ENCODE measurements at regions of chr16 and their contacts with region 1.

Region 1: GRCh38 chr16:4944333-4945281 is 7.7 kb upstream of the PPL start:
- DNase-seq: peak; percentile 84
- ATAC-seq: peak; percentile 65
- H3K4me3 ChIP-seq: peak overlapping the region; percentile 35 to 41
- H3K27ac ChIP-seq: peak overlapping the region; percentile 100
- H3K4me1 ChIP-seq: peaks cover 63 to 82% of the 10 kb centered on the region in 2 experiments
- H3K27me3 ChIP-seq: no peaks in the 10 kb centered on the region
- CTCF ChIP-seq: no peak
- POLR2A ChIP-seq: no peak
- RAD21 ChIP-seq: no peak

Region 2: GRCh38 chr16:4529085-4530060 is 415.2 kb before region 1 on chr16:
- CTCF ChIA-PET with region 1: no interaction called
- POLR2A ChIA-PET with region 1: no interaction called
- RAD21 ChIA-PET with region 1: no interaction called
- intact Hi-C with region 1: no loop called
- DNase-seq: no peak
- ATAC-seq: no peak; the same call in 1 of the 2 replicates
- H3K4me3 ChIP-seq: no peak overlapping the region
- H3K27ac ChIP-seq: no peak overlapping the region
- H3K4me1 ChIP-seq: no peaks in the 10 kb centered on the region
- H3K27me3 ChIP-seq: no peaks in the 10 kb centered on the region
- CTCF ChIP-seq: no peak
- POLR2A ChIP-seq: no peak
- RAD21 ChIP-seq: no peak

Region 3: GRCh38 chr16:4624015-4624826 is 320.4 kb before region 1 on chr16 and contains the start of gene MGRN1:
- CTCF ChIA-PET with region 1: no interaction called
- POLR2A ChIA-PET with region 1: no interaction called
- RAD21 ChIA-PET with region 1: no interaction called
- intact Hi-C with region 1: loop called (anchors 5 kb)
- DNase-seq: peak; percentile 96
- ATAC-seq: peak; percentile 96
- H3K4me3 ChIP-seq: peak within 1 kb of the TSS; percentile 86 to 87
- H3K27ac ChIP-seq: peak within 1 kb of the TSS; percentile 95
- H3K4me1 ChIP-seq: peaks cover 15 to 21% of the 10 kb centered on the region in 2 experiments
- H3K27me3 ChIP-seq: no peaks in the 10 kb centered on the region
- CTCF ChIP-seq: peak; percentile 85 to 98 (median 97); a peak in 5 of 6 replicates
- POLR2A ChIP-seq: no peak
- RAD21 ChIP-seq: peak; percentile 72; the same call in 1 of the 2 replicates
- total RNA-seq, gene MGRN1: 50.6 TPM

Region 4: DNA sequence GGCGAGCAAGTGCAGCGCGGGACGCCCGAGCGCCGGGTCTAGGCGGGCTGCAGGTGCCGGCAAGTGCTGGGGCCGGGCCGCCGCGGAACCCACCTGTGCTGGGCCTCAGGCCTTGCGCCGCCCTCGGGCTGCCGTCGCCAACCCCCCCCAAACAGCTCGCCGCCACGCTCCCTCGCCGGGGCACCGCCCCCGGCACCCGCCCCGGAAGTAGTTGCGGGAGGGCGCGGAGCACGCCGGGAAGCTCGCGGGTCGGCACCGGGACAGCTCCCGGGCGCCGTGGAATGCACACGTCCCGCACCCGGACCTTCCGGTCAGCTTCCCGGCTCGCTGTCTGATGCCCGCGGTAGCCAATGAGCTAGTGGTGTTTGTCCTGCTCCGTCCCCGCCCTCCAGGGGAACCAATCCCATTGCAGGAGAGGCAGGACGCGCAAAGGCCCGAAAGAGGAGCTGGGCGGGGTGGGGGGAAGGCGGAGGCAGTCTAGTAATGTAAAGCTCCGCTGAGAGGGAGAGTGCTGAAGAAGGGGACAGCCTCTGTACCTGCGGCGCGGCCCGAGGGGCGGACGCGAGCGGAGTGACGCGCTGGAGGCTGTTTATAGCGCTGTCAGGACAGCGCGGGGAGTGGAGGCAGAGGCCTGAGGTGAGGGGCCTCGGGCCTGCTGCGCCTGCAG is 210.4 kb before region 1 on chr16 and contains the starts of genes ANKS3 and DNAAF8:
- CTCF ChIA-PET with region 1: no interaction called
- POLR2A ChIA-PET with region 1: interaction called, 6 read pairs
- RAD21 ChIA-PET with region 1: no interaction called
- intact Hi-C with region 1: loop called (anchors 5 kb)
- DNase-seq: peak; percentile 92
- ATAC-seq: peak; percentile 94
- H3K4me3 ChIP-seq: peak within 1 kb of the TSS; percentile 97
- H3K27ac ChIP-seq: peak within 1 kb of the TSS; percentile 83
- H3K4me1 ChIP-seq: peaks cover 8 to 19% of the 10 kb centered on the region in 2 experiments
- H3K27me3 ChIP-seq: no peaks in the 10 kb centered on the region
- CTCF ChIP-seq: no peak
- POLR2A ChIP-seq: peak; percentile 57
- RAD21 ChIP-seq: no peak
- total RNA-seq, gene ANKS3: 25.5 TPM
- total RNA-seq, gene DNAAF8: 1.0 TPM

Region 5: DNA sequence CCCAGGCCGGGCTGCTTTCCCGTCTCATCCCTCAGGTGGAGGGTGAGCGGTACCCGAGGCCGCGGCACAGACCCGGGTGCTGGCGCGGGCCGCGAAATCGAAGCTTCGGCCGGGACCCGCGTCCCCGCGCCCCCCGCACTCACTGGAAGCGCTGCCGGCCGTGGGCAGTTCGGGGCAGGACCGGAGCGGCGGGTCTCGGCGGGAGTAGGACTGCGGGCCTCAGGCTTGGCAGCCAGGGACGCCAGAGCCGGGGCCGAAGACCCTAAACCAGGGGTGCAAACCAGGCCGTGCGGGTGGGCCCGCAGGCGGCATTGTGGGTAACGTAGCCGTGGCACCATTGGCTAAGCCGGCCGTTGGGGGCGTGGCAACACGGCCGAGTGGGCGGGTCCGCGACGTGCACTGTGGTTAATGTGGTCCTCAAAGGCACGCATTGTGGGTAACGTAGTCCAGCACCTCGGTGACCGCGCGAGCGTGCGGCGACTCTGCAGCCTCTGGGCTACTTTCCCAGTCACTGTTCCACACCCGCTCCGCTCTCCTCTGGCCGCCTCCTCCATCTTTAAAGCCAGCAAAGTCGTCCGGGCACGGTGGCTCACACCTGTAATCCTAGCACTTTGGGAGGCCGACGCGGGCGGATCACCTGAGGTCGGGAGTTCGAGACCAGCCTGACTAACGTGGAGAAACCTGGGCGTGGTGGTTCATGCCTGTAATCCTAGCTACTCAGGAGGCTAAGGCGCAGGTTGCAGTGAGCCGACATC is 177.6 kb before region 1 on chr16 and contains the start of gene ZNF500:
- CTCF ChIA-PET with region 1: no interaction called
- POLR2A ChIA-PET with region 1: no interaction called
- RAD21 ChIA-PET with region 1: no interaction called
- intact Hi-C with region 1: loop called (anchors 5 kb)
- DNase-seq: peak; percentile 90
- ATAC-seq: peak; percentile 87
- H3K4me3 ChIP-seq: peak within 1 kb of the TSS; percentile 92 to 93
- H3K27ac ChIP-seq: peak within 1 kb of the TSS; percentile 56
- H3K4me1 ChIP-seq: peaks cover 12 to 23% of the 10 kb centered on the region in 2 experiments
- H3K27me3 ChIP-seq: no peaks in the 10 kb centered on the region
- CTCF ChIP-seq: no peak
- POLR2A ChIP-seq: peak; percentile 81
- RAD21 ChIP-seq: no peak
- total RNA-seq, gene ZNF500: 20.1 TPM

Region 6: DNA sequence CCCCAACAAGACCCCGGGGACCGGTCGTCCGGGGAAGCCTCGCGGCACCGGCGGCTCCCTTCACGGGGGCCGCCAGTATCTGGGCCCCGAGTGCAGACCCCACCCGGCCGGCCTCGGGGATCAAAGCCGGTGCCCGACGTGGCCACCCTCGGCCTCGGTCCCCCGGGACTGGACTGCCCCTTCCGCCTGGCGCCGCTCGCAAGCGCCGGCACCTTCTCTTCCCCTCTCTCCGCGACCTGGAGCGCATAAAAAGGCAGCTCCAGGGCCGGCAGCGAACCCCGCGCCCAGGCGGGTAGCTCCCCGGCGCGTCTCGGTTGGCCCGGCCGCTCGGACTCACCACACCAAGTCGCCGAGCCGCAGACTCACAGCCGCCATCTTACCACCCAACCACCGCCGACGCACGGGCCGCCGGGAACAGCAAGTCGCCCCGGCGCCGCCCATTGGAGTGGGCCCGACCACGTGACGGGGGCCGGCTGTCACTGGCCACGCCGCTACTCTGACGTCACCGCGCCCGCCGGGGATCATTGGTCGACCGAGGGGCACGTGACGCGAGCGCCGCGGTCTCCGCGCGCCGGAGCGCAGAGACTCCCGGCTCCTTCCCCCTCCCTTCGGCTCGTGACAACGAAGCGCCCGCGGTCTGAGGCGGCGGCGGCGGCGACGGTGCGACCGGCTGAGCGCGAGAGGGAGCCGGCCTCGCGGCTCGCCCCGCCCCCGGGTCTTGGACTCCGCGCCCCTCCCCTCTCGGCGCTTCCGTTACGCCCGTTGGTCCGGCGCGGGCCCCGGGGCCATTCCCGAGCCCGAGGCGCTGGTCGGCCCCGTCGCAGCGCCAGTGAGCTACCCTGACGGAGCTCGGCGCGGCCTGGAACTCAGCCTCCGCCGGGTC is 97.5 kb before region 1 on chr16 and contains the starts of genes GLYR1 and UBN1:
- CTCF ChIA-PET with region 1: no interaction called
- POLR2A ChIA-PET with region 1: no interaction called
- RAD21 ChIA-PET with region 1: no interaction called
- intact Hi-C with region 1: loop called (anchors 2 kb)
- DNase-seq: peak; percentile 86
- ATAC-seq: peak; percentile 89
- H3K4me3 ChIP-seq: peak within 1 kb of the TSS; percentile 90 to 92
- H3K27ac ChIP-seq: peak within 1 kb of the TSS; percentile 91
- H3K4me1 ChIP-seq: peaks cover 13 to 35% of the 10 kb centered on the region in 2 experiments
- H3K27me3 ChIP-seq: no peaks in the 10 kb centered on the region
- CTCF ChIP-seq: no peak
- POLR2A ChIP-seq: peak; percentile 55
- RAD21 ChIP-seq: no peak
- total RNA-seq, gene GLYR1: 50.0 TPM
- total RNA-seq, gene UBN1: 31.9 TPM

Region 7: DNA sequence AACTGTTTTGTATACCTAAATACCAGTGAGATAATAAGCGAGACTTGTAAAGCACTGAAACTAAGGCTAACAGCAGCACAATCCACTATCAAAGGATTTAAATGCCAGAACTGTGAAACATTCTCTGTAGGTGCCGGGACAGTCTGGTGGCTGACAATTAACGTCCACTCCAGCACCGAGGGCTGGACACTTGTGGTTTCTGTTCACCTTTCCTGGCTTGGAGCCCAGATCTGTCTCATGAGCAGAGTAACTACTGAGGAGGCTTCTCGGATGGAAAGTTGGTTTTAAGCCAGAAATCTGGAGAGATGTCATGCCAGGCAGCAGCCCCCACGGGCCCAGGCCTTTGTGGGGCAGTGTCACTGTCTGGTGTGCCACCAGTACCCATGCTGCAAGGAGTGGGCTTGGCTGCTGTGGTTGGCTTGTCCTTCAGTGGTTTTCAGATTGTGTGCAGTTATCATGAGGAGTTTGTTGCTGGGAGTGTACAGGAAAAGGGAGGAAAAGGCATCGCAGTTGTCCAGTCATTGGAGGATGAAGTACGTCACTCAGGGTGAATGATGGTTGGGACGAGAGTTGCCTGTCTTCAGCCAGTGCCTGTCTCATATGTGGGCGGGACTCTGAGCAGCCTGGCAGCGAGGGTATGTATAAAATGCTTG is 61.8 kb before region 1 on chr16:
- CTCF ChIA-PET with region 1: no interaction called
- POLR2A ChIA-PET with region 1: no interaction called
- RAD21 ChIA-PET with region 1: no interaction called
- intact Hi-C with region 1: loop called (anchors 1 kb)
- DNase-seq: peak; percentile 92
- ATAC-seq: peak; percentile 85
- H3K4me3 ChIP-seq: no peak overlapping the region
- H3K27ac ChIP-seq: peak overlapping the region; percentile 45; the same call in 1 of the 2 replicates
- H3K4me1 ChIP-seq: peaks cover 21 to 27% of the 10 kb centered on the region in 2 experiments
- H3K27me3 ChIP-seq: no peaks in the 10 kb centered on the region
- CTCF ChIP-seq: no peak
- POLR2A ChIP-seq: no peak
- RAD21 ChIP-seq: peak; percentile 33; the same call in 1 of the 2 replicates